Breast epithelium (tissue), 4 donors: ENCODE measurements at regions of chr21 and their contacts with region 1.

Region 1: DNA sequence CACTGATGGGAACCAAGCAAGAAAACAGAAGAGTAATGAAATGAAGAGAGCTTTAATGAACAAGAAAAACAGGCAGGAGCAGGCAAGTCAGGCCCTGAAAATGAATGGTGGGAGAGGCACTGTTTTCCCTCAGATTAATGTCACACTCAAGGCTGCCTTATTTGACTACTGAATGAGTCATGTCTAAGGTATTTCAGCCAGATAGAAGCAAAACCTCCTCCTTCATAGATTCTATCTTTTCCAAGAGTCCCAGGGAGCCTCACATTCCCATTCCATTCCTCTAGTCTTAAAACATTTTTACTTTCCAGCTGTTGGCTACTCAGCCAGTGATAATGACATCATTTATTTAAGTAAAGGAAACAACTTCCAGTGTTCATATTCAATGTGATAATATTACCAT is 228.4 kb upstream of the NRIP1 start:
- DNase-seq: no peak
- H3K4me3 ChIP-seq: no peak overlapping the region
- H3K27ac ChIP-seq: no peak overlapping the region
- H3K4me1 ChIP-seq: no peaks in the 10 kb centered on the region
- H3K27me3 ChIP-seq: no peaks in the 10 kb centered on the region
- CTCF ChIP-seq: no peak
- POLR2A ChIP-seq: no peak

Region 2: GRCh38 chr21:15236111-15236510 is 57.1 kb before region 1 on chr21:
- intact Hi-C with region 1: loop called (anchors 2 kb)
- DNase-seq: no peak
- H3K4me3 ChIP-seq: no peak overlapping the region
- H3K27ac ChIP-seq: no peak overlapping the region
- H3K4me1 ChIP-seq: no peaks in the 10 kb centered on the region
- H3K27me3 ChIP-seq: no peaks in the 10 kb centered on the region
- CTCF ChIP-seq: no peak
- POLR2A ChIP-seq: no peak

Region 3: GRCh38 chr21:15775981-15776380 is 482.7 kb after region 1 on chr21:
- intact Hi-C with region 1: loop called (anchors 10 kb)
- DNase-seq: no peak
- H3K4me3 ChIP-seq: no peak overlapping the region
- H3K27ac ChIP-seq: no peak overlapping the region
- H3K4me1 ChIP-seq: no peaks in the 10 kb centered on the region
- H3K27me3 ChIP-seq: no peaks in the 10 kb centered on the region
- CTCF ChIP-seq: no peak
- POLR2A ChIP-seq: no peak